ENCODE measurements at regions of chr3 and their contacts with region 1.

Region 1: GRCh38 chr3:8987645-8988383 is 24.5 kb upstream of the RAD18 start:
- DNase-seq: peak in 5 of 6 donors; percentile 14 to 79 (median 57)
- ATAC-seq: peak; percentile 46 to 93 (median 89)
- H3K4me3 ChIP-seq: no peak overlapping the region
- H3K27ac ChIP-seq: no peak overlapping the region
- H3K4me1 ChIP-seq: no peaks in the 10 kb centered on the region
- H3K27me3 ChIP-seq: no peaks in the 10 kb centered on the region
- CTCF ChIP-seq: peak; percentile 42 to 69 (median 62)

Region 2: GRCh38 chr3:9067352-9067975 is 79.7 kb after region 1 on chr3:
- intact Hi-C with region 1: loop called in 2 of 3 experiments (anchors 5 to 10 kb)
- DNase-seq: peak in 3 of 6 donors; percentile 16 to 46 (median 20)
- ATAC-seq: peak in 3 of 4 donors; percentile 84 to 90 (median 85)
- H3K4me3 ChIP-seq: no peak overlapping the region
- H3K27ac ChIP-seq: no peak overlapping the region
- H3K4me1 ChIP-seq: no peaks in the 10 kb centered on the region
- H3K27me3 ChIP-seq: no peaks in the 10 kb centered on the region
- CTCF ChIP-seq: peak; percentile 55 to 86 (median 81)

Region 3: DNA sequence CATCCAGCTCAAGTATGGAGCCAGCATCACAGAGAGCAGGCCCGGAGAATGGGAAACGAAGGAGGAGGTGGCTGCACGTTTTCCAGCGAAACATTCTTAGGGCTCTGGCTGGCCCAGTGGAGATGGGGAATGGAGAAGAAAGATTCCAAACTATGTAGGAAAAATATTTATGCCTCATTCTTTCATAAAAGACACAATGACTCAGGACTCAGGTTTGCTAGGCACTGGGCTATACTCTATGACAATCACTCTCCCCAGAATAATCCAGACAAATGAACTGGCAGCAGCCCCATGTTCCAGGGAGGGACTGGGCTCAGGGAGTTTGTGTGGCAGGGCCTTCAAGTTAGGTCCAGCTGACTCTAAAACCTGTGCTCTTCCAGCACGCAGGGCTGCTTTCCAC is 86.3 kb after region 1 on chr3:
- intact Hi-C with region 1: loop called in 2 of 3 experiments (anchors 5 to 10 kb)
- DNase-seq: no peak
- ATAC-seq: no peak
- H3K4me3 ChIP-seq: no peak overlapping the region
- H3K27ac ChIP-seq: no peak overlapping the region
- H3K4me1 ChIP-seq: no peaks in the 10 kb centered on the region
- H3K27me3 ChIP-seq: no peaks in the 10 kb centered on the region
- CTCF ChIP-seq: no peak

Measured in pancreas (tissue), 10 donors.